ENCODE measurements at regions of chr12 and their contacts with region 1.

Region 1: GRCh38 chr12:49776413-49776812 is 35.1 kb downstream of the TMBIM6 start:
- DNase-seq: peak; percentile 32 to 61
- H3K4me3 ChIP-seq: no peak overlapping the region
- H3K27ac ChIP-seq: no peak overlapping the region
- H3K4me1 ChIP-seq: no peaks in the 10 kb centered on the region
- H3K27me3 ChIP-seq: no peaks in the 10 kb centered on the region
- CTCF ChIP-seq: peak; percentile 58 to 80 (median 71)
- POLR2A ChIP-seq: no peak

Region 2: DNA sequence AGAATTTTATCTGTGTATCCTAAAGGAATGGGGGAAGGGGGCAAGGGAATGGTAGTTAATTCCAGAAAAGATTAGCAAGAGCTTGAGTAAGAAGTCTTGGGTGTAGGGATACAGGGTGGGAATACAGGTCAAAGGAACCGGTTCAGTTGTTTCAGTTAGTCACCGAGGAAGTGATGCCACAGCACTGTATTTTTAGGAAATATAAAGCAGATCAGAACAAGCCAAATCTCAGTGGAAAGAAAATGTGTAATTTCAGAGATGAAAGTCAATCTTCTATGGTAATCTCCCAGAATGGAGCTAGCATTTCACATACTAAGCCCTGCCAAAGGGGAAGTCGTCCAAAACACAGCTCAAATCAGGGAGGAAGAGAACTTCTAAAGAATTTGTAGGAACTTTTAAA is 516.2 kb before region 1 on chr12:
- intact Hi-C with region 1: no loop called
- DNase-seq: no peak
- H3K4me3 ChIP-seq: no peak overlapping the region
- H3K27ac ChIP-seq: no peak overlapping the region
- H3K4me1 ChIP-seq: no peaks in the 10 kb centered on the region
- H3K27me3 ChIP-seq: no peaks in the 10 kb centered on the region
- CTCF ChIP-seq: no peak
- POLR2A ChIP-seq: no peak

Region 3: DNA sequence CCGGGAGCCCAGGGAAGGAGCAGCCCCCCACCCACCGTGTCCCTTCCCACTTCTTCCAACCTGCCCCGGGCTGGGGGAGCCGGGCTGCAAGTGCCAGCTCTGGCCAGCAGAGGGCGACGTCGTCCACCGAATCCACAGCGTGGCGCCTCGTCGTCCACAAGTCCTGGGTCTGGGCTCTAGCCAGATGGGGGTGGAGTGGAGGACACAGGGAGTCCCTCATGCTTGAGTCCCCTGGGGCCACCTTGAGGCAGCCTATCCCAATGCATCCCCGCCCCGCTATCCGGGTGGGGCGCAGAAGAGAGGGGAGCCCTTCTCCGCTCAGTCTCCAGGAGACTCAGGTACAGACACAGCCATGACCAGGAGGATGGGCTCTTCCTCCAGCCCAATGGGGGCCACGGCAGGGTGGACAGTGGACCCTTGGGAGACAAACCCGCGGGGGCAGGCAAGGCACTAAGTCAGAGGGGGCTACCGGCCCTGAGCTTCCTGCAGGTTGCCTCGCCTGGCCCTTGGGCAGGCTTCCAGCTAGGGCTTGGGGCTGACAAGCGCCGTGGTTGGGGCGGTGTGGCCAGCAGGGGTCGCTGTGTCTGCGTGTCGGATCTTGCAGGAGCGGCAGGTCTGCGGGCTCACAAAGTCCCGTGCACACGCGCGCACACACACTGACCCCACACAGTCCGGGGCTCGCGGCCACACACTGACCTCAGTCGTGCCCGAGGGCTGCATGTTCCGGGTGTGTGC is 190.8 kb after region 1 on chr12:
- intact Hi-C with region 1: loop called (anchors 10 kb)
- DNase-seq: peak; percentile 71 to 89
- H3K4me3 ChIP-seq: peak overlapping the region; percentile 4 to 57 (median 36)
- H3K27ac ChIP-seq: no peak overlapping the region
- H3K4me1 ChIP-seq: peaks cover 0 to 8% of the 10 kb centered on the region in 2 donors
- H3K27me3 ChIP-seq: peaks cover 0 to 3% of the 10 kb centered on the region in 2 donors
- CTCF ChIP-seq: peak; percentile 70 to 84 (median 79)
- POLR2A ChIP-seq: no peak

Region 4: DNA sequence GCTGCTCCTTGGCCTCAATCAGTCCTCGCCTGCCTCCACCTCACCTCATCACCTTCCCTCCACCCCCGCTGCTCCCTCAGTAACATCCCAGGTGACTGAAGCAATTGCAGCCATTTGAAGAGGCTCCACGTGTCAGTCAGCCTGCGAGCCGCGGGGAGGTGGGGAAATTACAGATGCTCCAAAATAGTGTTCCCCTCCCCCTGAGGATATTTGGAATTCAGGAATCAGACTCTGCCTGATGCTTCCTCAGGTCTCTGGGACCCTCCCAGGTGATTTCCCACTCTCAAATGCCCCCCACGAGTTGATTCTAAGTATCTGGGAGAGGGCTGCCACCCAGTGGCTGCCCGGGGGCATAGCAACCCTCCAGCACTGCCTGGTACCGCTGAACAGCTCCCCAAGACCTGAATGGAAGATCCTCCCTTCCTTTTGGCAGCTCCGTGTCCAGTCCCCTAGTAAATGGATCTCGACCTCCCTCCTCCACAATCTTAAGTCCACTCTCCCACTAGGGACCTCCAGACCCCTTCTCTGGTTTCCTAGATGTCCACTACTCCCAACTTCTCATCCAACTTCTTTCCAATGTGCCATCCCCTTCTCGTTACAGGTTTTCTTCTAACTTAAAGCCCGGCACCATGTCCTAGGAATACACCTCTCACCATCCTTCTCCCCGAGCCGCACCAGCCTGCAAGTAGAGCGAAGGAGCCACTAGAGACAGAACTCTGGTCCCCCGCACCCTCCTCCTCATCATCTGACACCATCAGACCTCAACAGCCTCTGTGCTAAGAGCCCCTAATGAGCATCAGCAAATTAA is 279.6 kb after region 1 on chr12:
- intact Hi-C with region 1: loop called (anchors 10 kb)
- DNase-seq: peak in 1 of 2 donors; percentile 26
- H3K4me3 ChIP-seq: peak overlapping the region in 1 of 3 donors; percentile 43
- H3K27ac ChIP-seq: no peak overlapping the region
- H3K4me1 ChIP-seq: peaks cover 6 to 13% of the 10 kb centered on the region in 2 donors
- H3K27me3 ChIP-seq: peaks cover 0 to 4% of the 10 kb centered on the region in 2 donors
- CTCF ChIP-seq: peak; percentile 63 to 81 (median 79)
- POLR2A ChIP-seq: no peak